CD8-positive, alpha-beta T cell (primary cell): ENCODE measurements at regions of chr2 and their contacts with region 1.

Region 1: GRCh38 chr2:232310121-232310520 is 68.4 kb upstream of the ALPP start:
- DNase-seq: peak in 6 of 9 experiments; percentile 26 to 79 (median 56)
- ATAC-seq: peak; percentile 77
- H3K4me3 ChIP-seq: peak overlapping the region in 1 of 2 experiments; percentile 9
- H3K4me3 Mint-ChIP-seq: peak overlapping the region; percentile 59
- H3K27ac ChIP-seq: peak overlapping the region; percentile 45 to 79
- H3K27ac Mint-ChIP-seq: peak overlapping the region; percentile 91
- H3K4me1 ChIP-seq: peaks cover 90% of the 10 kb centered on the region
- H3K4me1 Mint-ChIP-seq: peaks cover 83% of the 10 kb centered on the region
- H3K27me3 ChIP-seq: no peaks in the 10 kb centered on the region
- H3K27me3 Mint-ChIP-seq: no peaks in the 10 kb centered on the region
- CTCF ChIP-seq: no peak

Region 2: GRCh38 chr2:231925303-231926179 is 384.6 kb before region 1 on chr2:
- CTCF ChIA-PET with region 1: interaction called, 10 read pairs
- POLR2A ChIA-PET with region 1: no interaction called
- intact Hi-C with region 1: no loop called
- DNase-seq: peak; percentile 46 to 85 (median 68)
- ATAC-seq: peak; percentile 62
- H3K4me3 ChIP-seq: peak overlapping the region; percentile 35 to 66
- H3K4me3 Mint-ChIP-seq: peak overlapping the region; percentile 76
- H3K27ac ChIP-seq: no peak overlapping the region
- H3K27ac Mint-ChIP-seq: no peak overlapping the region
- H3K4me1 ChIP-seq: peaks cover 16% of the 10 kb centered on the region
- H3K4me1 Mint-ChIP-seq: peaks cover 11% of the 10 kb centered on the region
- H3K27me3 ChIP-seq: peaks cover 7 to 11% of the 10 kb centered on the region in 2 experiments
- H3K27me3 Mint-ChIP-seq: peaks cover 33% of the 10 kb centered on the region
- CTCF ChIP-seq: peak; percentile 73

Region 3: DNA sequence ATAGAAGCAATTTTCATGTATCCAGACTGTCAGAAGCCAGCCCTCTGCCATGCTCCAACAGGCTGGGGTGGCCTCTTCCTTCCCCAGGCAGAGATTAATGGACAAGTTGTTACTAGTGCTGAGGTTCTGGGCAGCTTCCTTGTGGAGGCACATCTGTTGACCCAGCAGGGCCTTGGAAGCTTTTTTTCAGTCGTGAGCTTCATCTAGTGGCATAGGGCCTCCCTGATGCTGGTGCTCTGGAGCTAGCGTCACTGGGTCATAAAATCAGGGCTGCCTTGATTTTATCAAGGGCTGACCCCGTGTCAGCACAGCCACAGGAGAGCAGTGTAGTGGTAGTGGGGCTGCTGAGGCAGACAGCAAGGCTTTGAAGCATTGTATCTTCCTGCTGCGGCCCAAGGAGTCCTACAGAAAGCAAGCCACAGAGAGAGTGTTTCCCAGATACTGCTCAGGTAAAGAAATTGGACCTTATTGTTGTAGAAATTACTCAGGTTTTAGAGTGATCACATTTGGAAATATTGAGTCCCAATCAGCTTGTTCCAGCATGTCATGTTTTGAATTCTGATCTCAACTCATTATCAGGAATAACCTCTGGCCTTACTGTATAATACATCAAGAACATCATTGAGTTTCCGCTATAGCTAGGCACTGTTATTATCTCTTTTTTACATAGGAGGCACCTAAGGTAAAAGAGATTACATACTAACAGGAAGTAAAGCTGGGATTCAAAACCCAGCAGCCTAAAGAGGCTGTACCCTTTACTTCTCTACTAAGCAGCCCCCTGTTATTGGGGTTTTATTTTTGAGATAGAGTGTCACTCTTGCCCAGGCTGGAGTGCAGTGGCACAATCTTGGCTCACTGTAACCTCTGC is 23.9 kb before region 1 on chr2:
- CTCF ChIA-PET with region 1: interaction called, 12 read pairs
- POLR2A ChIA-PET with region 1: interaction called, 17 read pairs
- intact Hi-C with region 1: loop called in 1 of 2 experiments (anchors 5 kb)
- DNase-seq: peak in 1 of 9 experiments; percentile 28
- ATAC-seq: peak; percentile 63
- H3K4me3 ChIP-seq: no peak overlapping the region
- H3K4me3 Mint-ChIP-seq: peak overlapping the region; percentile 26
- H3K27ac ChIP-seq: peak overlapping the region; percentile 13 to 62
- H3K27ac Mint-ChIP-seq: peak overlapping the region; percentile 94
- H3K4me1 ChIP-seq: peaks cover 47% of the 10 kb centered on the region
- H3K4me1 Mint-ChIP-seq: peaks cover 57% of the 10 kb centered on the region
- H3K27me3 ChIP-seq: no peaks in the 10 kb centered on the region
- H3K27me3 Mint-ChIP-seq: no peaks in the 10 kb centered on the region
- CTCF ChIP-seq: no peak

Region 4: DNA sequence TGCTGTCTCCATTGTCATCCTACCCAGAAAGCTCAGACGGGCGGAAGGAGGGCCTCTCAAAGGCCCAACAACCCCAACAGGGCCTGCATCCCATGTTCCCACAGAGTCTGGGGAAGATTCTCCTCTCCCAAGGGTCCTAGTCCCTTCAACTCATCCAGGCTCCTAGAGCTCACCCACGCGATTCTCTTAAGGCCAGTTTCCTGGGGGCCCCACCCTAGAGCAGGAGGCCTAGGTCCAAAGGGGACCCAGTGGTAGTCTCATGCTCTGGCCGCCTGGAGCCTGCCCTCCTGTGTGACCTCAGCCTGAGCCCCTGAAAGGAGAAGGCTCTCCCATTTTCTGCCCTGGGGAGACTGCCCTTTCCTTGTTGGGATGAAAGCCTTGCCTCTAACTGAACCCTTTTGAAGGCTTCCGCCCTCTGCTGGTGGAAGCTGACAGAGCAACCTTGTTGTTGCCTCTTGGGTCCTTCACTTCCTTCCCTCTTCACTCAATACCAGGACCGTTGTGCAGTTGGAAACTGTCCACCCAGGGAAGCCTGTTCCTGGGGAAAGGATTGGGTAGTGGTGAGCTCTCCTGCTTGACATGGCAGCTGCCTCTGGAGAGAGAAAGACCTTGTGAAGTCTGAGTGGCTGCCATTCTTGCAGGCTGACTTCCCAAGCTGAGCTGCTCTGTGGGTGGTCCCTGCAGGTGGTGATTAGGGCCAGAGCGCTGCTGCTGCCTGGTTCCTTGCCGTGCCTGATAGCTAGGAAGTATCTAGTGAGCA is 17.5 kb before region 1 on chr2:
- CTCF ChIA-PET with region 1: interaction called, 31 read pairs
- POLR2A ChIA-PET with region 1: interaction called, 17 read pairs
- intact Hi-C with region 1: no loop called
- DNase-seq: peak in 7 of 9 experiments; percentile 31 to 67 (median 53)
- ATAC-seq: peak; percentile 62
- H3K4me3 ChIP-seq: no peak overlapping the region
- H3K4me3 Mint-ChIP-seq: no peak overlapping the region
- H3K27ac ChIP-seq: no peak overlapping the region
- H3K27ac Mint-ChIP-seq: no peak overlapping the region
- H3K4me1 ChIP-seq: peaks cover 23% of the 10 kb centered on the region
- H3K4me1 Mint-ChIP-seq: peaks cover 26% of the 10 kb centered on the region
- H3K27me3 ChIP-seq: no peaks in the 10 kb centered on the region
- H3K27me3 Mint-ChIP-seq: no peaks in the 10 kb centered on the region
- CTCF ChIP-seq: peak; percentile 53

Region 5: DNA sequence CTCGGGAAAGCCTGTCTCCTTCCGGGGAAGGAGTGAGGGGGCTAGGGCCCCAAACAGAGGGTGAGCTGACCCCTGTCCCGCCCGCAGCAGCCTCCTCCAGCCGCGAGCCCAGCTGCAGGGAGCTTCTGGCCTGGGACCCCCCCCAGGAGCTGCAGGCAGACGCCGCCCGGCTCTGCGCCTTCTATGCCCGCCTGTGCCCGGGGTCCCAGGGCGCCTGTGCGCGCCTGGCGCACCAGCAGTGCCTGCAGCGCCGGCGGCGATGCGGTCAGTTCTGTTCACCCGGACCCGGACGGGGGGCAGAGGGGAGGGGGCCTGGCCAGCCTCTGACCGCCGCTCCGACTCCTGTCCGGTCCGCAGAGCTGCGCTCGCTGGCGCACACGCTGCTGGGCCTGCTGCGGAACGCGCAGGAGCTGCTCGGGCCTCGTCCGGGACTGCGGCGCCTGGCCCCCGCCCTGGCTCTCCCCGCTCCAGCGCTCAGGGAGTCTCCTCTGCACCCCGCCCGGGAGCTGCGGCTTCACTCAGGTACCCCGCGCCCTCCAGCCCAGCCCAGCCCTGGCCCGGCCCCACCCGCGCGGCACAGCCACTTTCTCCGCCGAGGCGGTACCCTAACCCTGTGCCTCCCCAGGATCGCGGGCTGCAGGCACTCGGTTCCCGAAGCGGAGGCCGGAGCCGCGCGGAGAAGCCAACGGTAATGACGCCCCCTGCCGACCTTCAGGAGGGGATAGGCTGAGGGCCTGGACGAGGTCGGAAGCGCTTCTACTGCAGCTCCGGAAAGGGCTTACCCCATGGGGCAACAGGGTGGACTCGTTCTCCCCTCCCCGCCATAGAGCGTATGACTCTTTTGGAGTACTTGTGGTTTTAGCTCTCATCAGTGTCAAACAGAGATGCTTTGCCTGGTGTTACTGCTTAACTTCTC is 213.8 kb after region 1 on chr2:
- CTCF ChIA-PET with region 1: no interaction called
- POLR2A ChIA-PET with region 1: no interaction called
- intact Hi-C with region 1: no loop called
- DNase-seq: peak in 2 of 9 experiments; percentile 37 to 42
- ATAC-seq: no peak
- H3K4me3 ChIP-seq: no peak overlapping the region
- H3K4me3 Mint-ChIP-seq: no peak overlapping the region
- H3K27ac ChIP-seq: no peak overlapping the region
- H3K27ac Mint-ChIP-seq: no peak overlapping the region
- H3K4me1 ChIP-seq: peaks cover 26% of the 10 kb centered on the region
- H3K4me1 Mint-ChIP-seq: peaks cover 17% of the 10 kb centered on the region
- H3K27me3 ChIP-seq: peaks cover 25 to 33% of the 10 kb centered on the region in 2 experiments
- H3K27me3 Mint-ChIP-seq: peaks cover 49% of the 10 kb centered on the region
- CTCF ChIP-seq: no peak